Panc1 (cell line): ENCODE measurements at regions of chr10 and their contacts with region 1.

Region 1: GRCh38 chr10:86971232-86971991 is 3.1 kb downstream of the ADIRF start:
- DNase-seq: peak; percentile 80
- ATAC-seq: peak; percentile 75
- H3K4me3 ChIP-seq: peak overlapping the region; percentile 54 to 77
- H3K27ac ChIP-seq: peak overlapping the region; percentile 79
- H3K4me1 ChIP-seq: peaks cover 45% of the 10 kb centered on the region
- H3K27me3 ChIP-seq: no peaks in the 10 kb centered on the region
- CTCF ChIP-seq: no peak

Region 2: GRCh38 chr10:86727470-86727869 is 243.9 kb before region 1 on chr10:
- CTCF ChIA-PET with region 1: no interaction called
- POLR2A ChIA-PET with region 1: no interaction called
- in situ Hi-C with region 1: no loop called
- intact Hi-C with region 1: no loop called
- DNase-seq: no peak
- ATAC-seq: no peak
- H3K4me3 ChIP-seq: no peak overlapping the region
- H3K27ac ChIP-seq: no peak overlapping the region
- H3K4me1 ChIP-seq: no peaks in the 10 kb centered on the region
- H3K27me3 ChIP-seq: no peaks in the 10 kb centered on the region
- CTCF ChIP-seq: no peak

Region 3: GRCh38 chr10:86747796-86748581 is 223.4 kb before region 1 on chr10:
- CTCF ChIA-PET with region 1: no interaction called
- POLR2A ChIA-PET with region 1: no interaction called
- in situ Hi-C with region 1: no loop called
- intact Hi-C with region 1: no loop called
- DNase-seq: no peak
- ATAC-seq: no peak
- H3K4me3 ChIP-seq: no peak overlapping the region
- H3K27ac ChIP-seq: no peak overlapping the region
- H3K4me1 ChIP-seq: no peaks in the 10 kb centered on the region; the same call in 1 of the 2 replicates
- H3K27me3 ChIP-seq: no peaks in the 10 kb centered on the region
- CTCF ChIP-seq: no peak

Region 4: GRCh38 chr10:87094373-87095235 is 123.2 kb after region 1 on chr10 and contains the starts of genes GLUD1 and SHLD2:
- CTCF ChIA-PET with region 1: interaction called, 3 read pairs
- POLR2A ChIA-PET with region 1: no interaction called
- in situ Hi-C with region 1: no loop called
- intact Hi-C with region 1: loop called (anchors 5 kb)
- DNase-seq: no peak
- ATAC-seq: peak; percentile 92
- H3K4me3 ChIP-seq: peak within 1 kb of the TSS; percentile 82 to 83
- H3K27ac ChIP-seq: peak within 1 kb of the TSS; percentile 90
- H3K4me1 ChIP-seq: peaks cover 27% of the 10 kb centered on the region
- H3K27me3 ChIP-seq: no peaks in the 10 kb centered on the region
- CTCF ChIP-seq: no peak
- total RNA-seq, gene GLUD1: 138 TPM
- total RNA-seq, gene SHLD2: 45.2 TPM